Endothelial cell of umbilical vein (primary cell): ENCODE measurements at regions of chr9 and their contacts with region 1.

Region 1: GRCh38 chr9:133335878-133336811 is at the start of gene SURF6:
- DNase-seq: peak; percentile 89
- H3K4me3 ChIP-seq: peak within 1 kb of the TSS; percentile 64 to 82 (median 71)
- H3K27ac ChIP-seq: peak within 1 kb of the TSS; percentile 44
- H3K4me1 ChIP-seq: peaks cover 7% of the 10 kb centered on the region
- H3K27me3 ChIP-seq: no peaks in the 10 kb centered on the region
- CTCF ChIP-seq: no peak
- POLR2A ChIP-seq: peak; percentile 86
- total RNA-seq, gene SURF6: 16.0 and 16.4 TPM in 2 replicates

Region 2: GRCh38 chr9:133199648-133200321 is 136.4 kb before region 1 on chr9:
- CTCF ChIA-PET with region 1: no interaction called
- POLR2A ChIA-PET with region 1: no interaction called
- dilution Hi-C with region 1: no loop called
- intact Hi-C with region 1: no loop called
- DNase-seq: no peak
- H3K4me3 ChIP-seq: no peak overlapping the region
- H3K27ac ChIP-seq: no peak overlapping the region
- H3K4me1 ChIP-seq: no peaks in the 10 kb centered on the region
- H3K27me3 ChIP-seq: peaks cover 0 to 4% of the 10 kb centered on the region in 2 experiments
- CTCF ChIP-seq: no peak
- POLR2A ChIP-seq: no peak

Region 3: DNA sequence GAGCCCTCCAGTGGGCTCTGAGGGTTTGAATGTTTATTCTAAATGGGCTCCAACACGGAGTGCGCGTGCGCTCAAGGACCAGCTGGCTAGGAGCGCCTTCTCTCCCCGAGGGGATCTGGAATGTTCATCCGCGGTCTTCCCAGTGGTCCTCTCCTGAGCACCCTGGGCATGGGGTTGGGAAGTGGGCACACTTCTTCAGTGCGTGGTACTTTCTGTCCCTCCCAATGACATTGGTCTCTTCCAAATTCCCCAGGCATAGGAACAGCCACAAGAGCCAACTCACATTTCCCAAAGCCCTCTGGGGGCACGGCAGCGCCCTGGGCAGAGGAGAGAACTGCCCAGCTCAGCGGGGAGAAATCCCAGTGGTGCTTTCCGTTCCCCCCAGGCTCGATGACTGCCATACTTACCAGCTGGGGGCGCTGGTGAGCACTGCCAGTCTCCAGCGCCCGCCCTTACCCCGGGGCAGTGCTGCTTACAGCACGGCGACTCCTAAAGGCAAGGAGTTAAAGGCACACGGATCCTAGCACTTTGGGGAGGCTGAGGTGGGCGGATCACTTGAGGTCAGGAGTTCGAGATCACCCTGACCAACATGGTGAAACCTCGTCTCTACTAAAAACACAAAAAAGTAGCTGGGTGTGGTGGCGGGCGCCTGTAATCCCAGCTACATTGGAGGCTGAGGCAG is 97.2 kb before region 1 on chr9:
- CTCF ChIA-PET with region 1: interaction called, 22 read pairs
- POLR2A ChIA-PET with region 1: interaction called, 3 read pairs
- dilution Hi-C with region 1: no loop called
- intact Hi-C with region 1: no loop called
- DNase-seq: peak; percentile 51
- H3K4me3 ChIP-seq: peak overlapping the region in 2 of 3 experiments; percentile 3 to 11
- H3K27ac ChIP-seq: peak overlapping the region; percentile 10
- H3K4me1 ChIP-seq: peaks cover 19% of the 10 kb centered on the region
- H3K27me3 ChIP-seq: peaks cover 2 to 6% of the 10 kb centered on the region in 2 experiments
- CTCF ChIP-seq: peak; percentile 85 to 92
- POLR2A ChIP-seq: no peak

Region 4: DNA sequence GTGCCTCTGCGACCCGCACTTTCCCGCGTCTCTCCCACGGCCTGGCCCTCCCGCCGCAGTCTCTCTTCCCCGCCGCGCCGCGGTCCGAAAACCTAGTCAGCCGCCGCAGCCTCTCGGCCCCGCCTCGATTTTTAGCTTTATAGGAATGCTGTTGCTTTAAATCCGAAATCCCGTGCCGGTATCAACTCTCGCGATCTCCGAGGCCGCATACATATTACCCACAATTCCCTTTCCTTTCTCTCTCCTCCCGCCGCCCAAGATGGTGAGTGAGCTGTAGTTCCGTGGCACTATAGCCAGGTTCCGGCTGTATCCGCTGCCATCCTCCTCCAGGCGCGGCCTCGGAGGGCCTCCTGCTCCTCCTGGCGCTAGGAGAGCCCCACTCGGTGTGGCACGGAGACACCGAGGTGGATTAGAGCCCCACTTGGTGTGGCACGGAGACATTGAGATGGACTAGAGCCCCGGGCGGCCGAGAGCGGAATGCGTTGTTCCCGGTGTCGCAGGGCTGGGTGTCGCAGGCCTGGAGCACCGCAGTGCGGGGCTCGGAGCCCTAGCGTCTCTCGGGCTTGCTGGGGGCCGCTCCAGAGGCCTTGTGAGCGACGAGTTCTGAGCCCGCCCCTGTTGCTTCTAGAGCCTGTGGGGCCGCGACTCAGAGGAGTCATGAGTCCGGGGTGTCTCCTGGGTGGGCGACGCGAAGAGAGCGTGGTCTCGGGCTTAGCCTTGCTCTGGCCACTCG is 12.0 kb after region 1 on chr9 and contains the starts of genes MED22 and RPL7A:
- CTCF ChIA-PET with region 1: no interaction called
- POLR2A ChIA-PET with region 1: interaction called, 4 read pairs
- dilution Hi-C with region 1: no loop called
- intact Hi-C with region 1: loop called (anchors 1 kb)
- DNase-seq: peak; percentile 97
- H3K4me3 ChIP-seq: peak within 1 kb of the TSS; percentile 69 to 84 (median 83)
- H3K27ac ChIP-seq: peak within 1 kb of the TSS; percentile 91
- H3K4me1 ChIP-seq: peaks cover 14% of the 10 kb centered on the region
- H3K27me3 ChIP-seq: no peaks in the 10 kb centered on the region
- CTCF ChIP-seq: no peak
- POLR2A ChIP-seq: peak; percentile 98
- total RNA-seq, gene MED22: 26.7 and 27.4 TPM in 2 replicates
- total RNA-seq, gene RPL7A: 2,043 and 2,112 TPM in 2 replicates

Region 5: GRCh38 chr9:133375724-133376654 is 39.8 kb after region 1 on chr9 and contains the starts of genes STKLD1 and SURF4:
- CTCF ChIA-PET with region 1: no interaction called
- POLR2A ChIA-PET with region 1: no interaction called
- dilution Hi-C with region 1: no loop called
- intact Hi-C with region 1: loop called (anchors 1 kb)
- DNase-seq: peak; percentile 98
- H3K4me3 ChIP-seq: peak within 1 kb of the TSS; percentile 76 to 99 (median 99)
- H3K27ac ChIP-seq: peak within 1 kb of the TSS; percentile 85
- H3K4me1 ChIP-seq: peaks cover 10% of the 10 kb centered on the region
- H3K27me3 ChIP-seq: no peaks in the 10 kb centered on the region
- CTCF ChIP-seq: no peak
- POLR2A ChIP-seq: peak; percentile 84
- total RNA-seq, gene STKLD1: 0.77 and 0.85 TPM in 2 replicates
- total RNA-seq, gene SURF4: 216 and 230 TPM in 2 replicates

Region 6: GRCh38 chr9:133449760-133450159 is 113.6 kb after region 1 on chr9:
- CTCF ChIA-PET with region 1: no interaction called
- POLR2A ChIA-PET with region 1: no interaction called
- dilution Hi-C with region 1: no loop called
- intact Hi-C with region 1: no loop called
- DNase-seq: no peak
- H3K4me3 ChIP-seq: no peak overlapping the region
- H3K27ac ChIP-seq: no peak overlapping the region
- H3K4me1 ChIP-seq: no peaks in the 10 kb centered on the region
- H3K27me3 ChIP-seq: no peaks in the 10 kb centered on the region
- CTCF ChIP-seq: no peak
- POLR2A ChIP-seq: no peak

Region 7: GRCh38 chr9:133478851-133479711 is 142.9 kb after region 1 on chr9 and contains the start of gene SLC2A6:
- CTCF ChIA-PET with region 1: no interaction called
- POLR2A ChIA-PET with region 1: no interaction called
- dilution Hi-C with region 1: no loop called
- intact Hi-C with region 1: no loop called
- DNase-seq: peak; percentile 78
- H3K4me3 ChIP-seq: peak within 1 kb of the TSS; percentile 50 to 73 (median 69)
- H3K27ac ChIP-seq: peak within 1 kb of the TSS; percentile 52
- H3K4me1 ChIP-seq: peaks cover 6% of the 10 kb centered on the region
- H3K27me3 ChIP-seq: no peaks in the 10 kb centered on the region
- CTCF ChIP-seq: no peak
- POLR2A ChIP-seq: peak; percentile 72
- total RNA-seq, gene SLC2A6: 35.7 and 39.0 TPM in 2 replicates

Region 8: DNA sequence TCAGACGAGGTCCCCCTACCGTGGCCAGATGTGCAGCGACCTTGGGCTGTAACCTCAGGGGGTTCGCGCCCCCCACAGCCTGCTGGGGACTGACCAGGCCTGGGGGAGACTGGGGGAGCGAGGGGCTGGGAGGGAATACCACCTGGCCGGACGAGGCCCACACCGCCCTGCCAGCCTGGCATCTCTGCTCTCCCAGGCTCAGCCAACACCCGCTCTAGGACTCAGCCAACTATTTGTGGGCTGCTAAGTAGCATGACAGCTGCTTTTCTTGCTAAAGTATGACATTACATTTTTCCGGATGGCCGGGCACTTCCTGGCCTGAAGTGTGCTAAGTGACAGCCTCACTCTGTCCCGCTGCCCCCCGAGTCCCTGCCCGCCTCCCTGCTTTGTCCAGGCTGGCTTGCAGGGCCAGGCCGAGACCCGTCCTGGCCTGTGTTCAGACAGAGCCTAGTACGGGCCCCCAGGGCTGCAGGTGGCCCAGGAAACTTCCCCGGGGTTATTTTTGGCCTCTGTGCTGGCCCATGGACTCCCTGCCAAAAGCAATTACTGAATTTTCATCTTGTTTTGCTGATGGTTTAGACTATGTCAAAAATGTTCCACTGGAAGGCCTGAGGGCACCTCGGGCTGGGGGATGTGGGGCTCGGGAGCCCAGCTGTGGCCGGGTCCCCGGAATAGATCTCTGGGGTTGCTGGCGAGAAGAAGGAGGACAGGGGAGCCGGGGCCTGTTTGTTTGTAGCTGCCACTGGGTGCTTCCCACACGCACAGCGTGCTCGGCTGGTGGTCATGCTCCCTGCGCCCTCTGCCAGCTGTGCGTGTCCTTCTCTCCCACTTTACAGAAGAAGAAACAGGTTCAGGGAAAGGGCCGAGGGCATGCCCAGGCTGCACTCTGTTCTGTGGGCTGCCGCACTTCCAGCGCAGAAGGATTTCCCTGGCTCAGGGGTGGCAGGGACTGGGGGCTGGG is 156.2 kb after region 1 on chr9:
- CTCF ChIA-PET with region 1: no interaction called
- POLR2A ChIA-PET with region 1: no interaction called
- dilution Hi-C with region 1: no loop called
- intact Hi-C with region 1: no loop called
- DNase-seq: no peak
- H3K4me3 ChIP-seq: no peak overlapping the region
- H3K27ac ChIP-seq: no peak overlapping the region
- H3K4me1 ChIP-seq: no peaks in the 10 kb centered on the region
- H3K27me3 ChIP-seq: no peaks in the 10 kb centered on the region
- CTCF ChIP-seq: no peak
- POLR2A ChIP-seq: no peak

Region 9: GRCh38 chr9:134344068-134344799 is 1008.1 kb after region 1 on chr9:
- CTCF ChIA-PET with region 1: no interaction called
- POLR2A ChIA-PET with region 1: no interaction called
- dilution Hi-C with region 1: no loop called
- intact Hi-C with region 1: loop called (anchors 5 kb)
- DNase-seq: no peak
- H3K4me3 ChIP-seq: no peak overlapping the region
- H3K27ac ChIP-seq: no peak overlapping the region
- H3K4me1 ChIP-seq: peaks cover 34% of the 10 kb centered on the region
- H3K27me3 ChIP-seq: no peaks in the 10 kb centered on the region
- CTCF ChIP-seq: peak in 1 of 2 donors; percentile 14
- POLR2A ChIP-seq: no peak